Activated CD4-positive, alpha-beta memory T cell treated with anti-CD3 and anti-CD28 coated beads for 36 hours (primary cell): ENCODE measurements at regions of chr6 and their contacts with region 1.

Region 1: DNA sequence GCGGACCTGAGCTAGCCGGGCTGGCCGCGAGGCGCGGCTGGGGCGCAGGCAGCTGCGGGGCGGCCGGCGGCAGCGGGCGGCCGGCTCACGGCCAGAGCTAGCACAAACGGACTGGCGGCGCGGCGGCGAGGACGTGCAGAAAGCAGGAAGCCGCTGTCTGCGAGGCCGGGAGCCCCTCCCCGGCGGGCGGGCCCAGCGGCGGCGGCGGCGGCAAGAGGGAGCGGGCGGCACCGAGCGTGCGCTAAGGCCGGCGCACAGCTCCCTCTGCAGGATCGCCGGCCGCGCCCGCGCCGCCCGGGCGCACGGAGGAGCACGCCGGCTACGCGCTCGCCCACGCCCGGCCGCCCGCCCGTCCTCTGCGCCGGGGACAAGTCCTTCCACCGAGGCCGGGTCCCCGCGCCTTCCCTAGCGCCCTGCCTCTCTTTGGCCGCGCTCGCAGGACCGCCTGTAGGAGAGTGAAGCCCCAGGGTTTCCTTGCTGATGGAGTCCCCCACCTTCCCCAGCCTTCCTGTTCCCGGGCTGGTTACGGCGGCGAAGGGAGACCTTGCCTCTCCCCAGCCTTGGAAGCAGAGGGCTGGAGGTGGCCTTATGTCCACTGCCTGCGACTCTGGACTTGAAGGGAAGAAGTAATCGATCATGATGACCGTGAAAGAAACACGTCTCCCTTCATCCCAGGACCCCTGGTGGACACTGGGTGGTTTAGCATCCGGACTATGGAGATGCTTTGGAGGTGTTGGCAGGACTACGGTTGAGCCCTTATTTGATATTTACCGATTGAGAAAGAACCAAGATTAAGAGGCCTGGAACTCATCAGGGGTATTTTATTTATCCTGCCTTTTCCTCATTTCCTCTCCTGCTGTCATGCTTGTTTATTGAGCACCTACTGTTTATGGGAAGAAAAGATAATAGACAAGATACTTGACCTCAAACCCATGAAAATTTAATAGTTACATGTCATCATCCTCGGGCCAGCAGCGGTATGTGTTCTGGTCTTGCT is at the start of gene PREP:
- DNase-seq: peak; percentile 88
- H3K4me3 Mint-ChIP-seq: peak within 1 kb of the TSS; percentile 90
- H3K27ac Mint-ChIP-seq: peak within 1 kb of the TSS; percentile 78
- H3K4me1 Mint-ChIP-seq: peaks cover 57% of the 10 kb centered on the region
- H3K27me3 Mint-ChIP-seq: peaks cover 3% of the 10 kb centered on the region
- total RNA-seq, gene PREP: 42.7 to 45.7 TPM

Region 2: DNA sequence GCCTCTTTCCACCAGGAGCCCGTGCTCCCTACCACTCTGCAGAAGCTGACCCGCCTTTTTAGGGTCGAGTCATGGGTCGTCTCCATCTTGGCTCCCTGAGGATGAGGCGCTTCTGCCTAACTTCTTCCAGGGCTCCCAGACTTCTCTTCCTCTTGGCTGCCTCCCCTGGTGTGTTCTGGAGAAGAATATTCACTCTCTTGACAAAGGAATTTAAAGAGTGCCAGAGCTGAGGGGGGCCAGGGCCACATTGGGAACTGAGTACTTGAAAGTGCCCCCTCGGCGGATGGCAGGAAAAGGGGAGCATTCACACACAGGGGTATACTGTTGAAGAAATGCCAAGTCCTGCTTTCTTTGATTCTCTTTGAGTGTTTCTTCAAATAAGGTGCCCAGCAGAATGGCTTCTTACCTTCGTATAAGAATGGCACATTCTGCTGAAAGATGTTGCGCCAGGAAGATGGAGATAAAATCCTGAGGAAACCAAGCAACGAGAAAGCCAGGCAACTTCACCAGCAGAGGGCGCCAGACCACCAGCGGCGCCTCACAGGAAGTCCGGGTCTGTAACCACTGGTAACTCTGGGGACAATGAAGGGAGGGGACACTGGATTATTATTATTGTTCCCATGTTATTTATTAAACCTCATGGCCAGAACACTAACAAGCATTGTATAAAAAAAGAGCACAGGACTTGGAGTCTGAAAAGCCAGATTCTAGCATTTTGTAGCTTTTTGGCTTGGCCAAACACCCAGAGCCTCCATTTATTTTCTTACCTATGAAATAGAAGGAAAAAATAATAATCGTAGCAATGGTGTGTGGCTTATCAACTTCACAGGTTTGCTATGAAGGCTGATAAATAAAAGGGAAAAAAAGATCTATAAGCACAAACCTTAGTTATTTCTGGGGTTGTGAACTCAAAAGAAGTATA is 720.3 kb before region 1 on chr6:
- CTCF ChIA-PET with region 1: no interaction called
- POLR2A ChIA-PET with region 1: no interaction called
- intact Hi-C with region 1: loop called (anchors 10 kb)
- DNase-seq: peak; percentile 81
- H3K4me3 Mint-ChIP-seq: no peak overlapping the region
- H3K27ac Mint-ChIP-seq: no peak overlapping the region
- H3K4me1 Mint-ChIP-seq: peaks cover 13% of the 10 kb centered on the region
- H3K27me3 Mint-ChIP-seq: no peaks in the 10 kb centered on the region

Region 3: GRCh38 chr6:104859225-104860146 is 543.8 kb before region 1 on chr6 and contains the start of gene HACE1:
- CTCF ChIA-PET with region 1: interaction called, 3 read pairs
- POLR2A ChIA-PET with region 1: no interaction called
- intact Hi-C with region 1: loop called (anchors 2 kb)
- DNase-seq: peak; percentile 92
- H3K4me3 Mint-ChIP-seq: peak within 1 kb of the TSS; percentile 93
- H3K27ac Mint-ChIP-seq: peak within 1 kb of the TSS; percentile 79
- H3K4me1 Mint-ChIP-seq: peaks cover 18% of the 10 kb centered on the region
- H3K27me3 Mint-ChIP-seq: peaks cover 2% of the 10 kb centered on the region
- total RNA-seq, gene HACE1: 15.0 to 17.6 TPM

Region 4: DNA sequence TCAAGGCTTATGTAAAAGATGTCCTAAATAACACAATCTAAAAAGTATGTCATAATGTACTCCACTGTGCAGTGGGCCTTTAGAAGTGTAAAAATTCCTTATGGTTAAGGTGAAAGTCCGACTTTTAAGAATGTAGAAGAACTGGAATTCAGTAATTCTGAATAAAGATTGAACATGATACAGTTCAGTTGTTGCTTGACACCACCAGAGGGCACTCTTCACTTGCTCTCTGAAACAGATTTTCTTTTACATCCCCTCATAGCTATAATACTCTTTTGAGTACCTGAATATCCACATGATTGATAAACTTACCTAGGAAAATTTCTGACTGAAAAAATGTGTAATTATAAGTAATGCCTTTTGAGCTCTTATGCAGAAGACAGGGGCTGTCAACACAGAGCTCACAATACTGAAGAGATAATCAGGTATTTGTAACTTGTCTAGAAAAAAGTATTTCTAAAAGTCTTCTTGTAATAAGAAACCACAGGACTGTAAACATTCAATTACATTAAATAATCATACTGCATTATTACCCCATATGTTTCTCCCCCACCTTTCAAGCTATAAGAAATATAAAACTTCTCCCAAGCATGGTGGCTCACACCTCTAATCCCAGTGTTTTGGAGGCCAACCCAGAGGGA is 315.5 kb before region 1 on chr6:
- CTCF ChIA-PET with region 1: interaction called, 20 read pairs
- POLR2A ChIA-PET with region 1: no interaction called
- intact Hi-C with region 1: loop called (anchors 1 kb)
- DNase-seq: no peak
- H3K4me3 Mint-ChIP-seq: no peak overlapping the region
- H3K27ac Mint-ChIP-seq: no peak overlapping the region
- H3K4me1 Mint-ChIP-seq: no peaks in the 10 kb centered on the region
- H3K27me3 Mint-ChIP-seq: peaks cover 3% of the 10 kb centered on the region

Region 5: GRCh38 chr6:105136431-105137350 is 266.5 kb before region 1 on chr6:
- CTCF ChIA-PET with region 1: interaction called, 3 read pairs
- POLR2A ChIA-PET with region 1: no interaction called
- intact Hi-C with region 1: loop called (anchors 1 kb)
- DNase-seq: peak; percentile 21
- H3K4me3 Mint-ChIP-seq: peak overlapping the region; percentile 44
- H3K27ac Mint-ChIP-seq: no peak overlapping the region
- H3K4me1 Mint-ChIP-seq: peaks cover 9% of the 10 kb centered on the region
- H3K27me3 Mint-ChIP-seq: peaks cover 46% of the 10 kb centered on the region

Region 6: DNA sequence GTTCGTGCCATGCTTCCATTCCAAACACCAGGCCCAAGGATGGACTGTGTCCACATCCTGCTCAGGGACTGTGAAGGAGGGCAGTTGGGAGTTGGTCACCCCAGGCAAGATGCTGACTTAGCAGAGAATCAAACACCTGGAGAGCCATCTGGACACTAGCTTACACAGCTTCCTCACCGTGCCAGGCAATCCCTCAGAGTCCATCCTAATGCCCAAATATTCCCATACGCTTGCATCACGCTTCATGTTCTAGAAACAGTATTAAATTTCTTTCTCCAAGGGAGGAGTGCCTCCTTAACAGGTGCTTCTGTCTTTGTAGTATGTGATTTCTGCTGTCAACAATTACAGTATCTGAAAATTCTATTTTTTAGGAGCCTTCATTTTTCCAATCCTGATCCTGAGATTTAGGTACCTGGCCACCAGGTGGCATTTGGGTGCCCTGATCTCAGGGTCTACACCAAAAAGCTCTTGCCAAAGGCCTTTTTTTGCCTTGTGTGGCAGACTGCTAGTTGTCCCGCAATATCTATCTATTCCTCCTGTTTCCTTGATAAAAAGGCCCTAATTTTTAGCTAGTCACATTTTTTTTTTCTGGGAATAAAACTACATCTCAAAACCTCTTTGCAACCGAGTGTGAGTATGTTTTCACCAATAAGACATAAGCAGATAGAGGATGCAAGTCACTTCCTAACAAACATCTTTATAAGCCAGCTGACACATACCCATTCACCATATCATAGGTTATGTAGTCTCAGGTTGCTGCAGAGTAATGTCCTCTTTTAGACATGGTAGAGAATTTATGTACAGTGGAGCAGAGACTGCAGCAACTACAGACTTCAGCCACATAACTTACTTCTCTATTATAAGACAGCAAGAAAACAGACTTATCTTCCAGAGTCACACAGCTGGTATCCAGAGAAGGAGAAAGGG is 85.4 kb before region 1 on chr6:
- CTCF ChIA-PET with region 1: interaction called, 9 read pairs
- POLR2A ChIA-PET with region 1: no interaction called
- intact Hi-C with region 1: loop called (anchors 1 kb)
- DNase-seq: peak; percentile 11
- H3K4me3 Mint-ChIP-seq: no peak overlapping the region
- H3K27ac Mint-ChIP-seq: no peak overlapping the region
- H3K4me1 Mint-ChIP-seq: no peaks in the 10 kb centered on the region
- H3K27me3 Mint-ChIP-seq: no peaks in the 10 kb centered on the region